Activated B cell treated with CpG ODN at 0.5 μM for 24 hours (primary cell): ENCODE measurements at regions of chr11 and their contacts with region 1.

Region 1: DNA sequence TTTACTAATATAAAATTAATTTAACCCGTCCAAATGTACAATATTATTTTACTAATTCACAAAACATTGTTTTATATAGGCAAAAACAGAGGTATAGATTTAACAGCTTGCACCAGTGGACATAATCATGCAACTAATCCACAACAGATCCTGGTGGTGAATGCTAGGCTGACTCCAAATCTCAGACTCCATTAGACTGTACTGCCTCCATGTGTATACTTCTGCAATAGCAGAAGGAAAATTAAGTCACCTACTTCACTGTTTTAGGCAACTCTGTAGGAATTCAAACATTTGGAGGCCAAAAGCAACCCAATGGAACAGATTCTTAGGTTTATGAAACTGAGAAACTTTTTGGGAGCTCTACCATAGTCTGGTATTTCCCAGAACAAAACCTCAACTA is 30.0 kb upstream of the RAB39A start:
- DNase-seq: no peak
- ATAC-seq: peak; percentile 57
- H3K4me3 Mint-ChIP-seq: no peak overlapping the region
- H3K27ac Mint-ChIP-seq: no peak overlapping the region
- H3K4me1 Mint-ChIP-seq: no peaks in the 10 kb centered on the region
- H3K27me3 Mint-ChIP-seq: peaks cover 5% of the 10 kb centered on the region
- CTCF ChIP-seq: no peak

Region 2: GRCh38 chr11:107573438-107573837 is 324.8 kb before region 1 on chr11:
- CTCF ChIA-PET with region 1: interaction called, 4 read pairs
- POLR2A ChIA-PET with region 1: no interaction called
- intact Hi-C with region 1: loop called (anchors 1 kb)
- DNase-seq: no peak
- ATAC-seq: no peak
- H3K4me3 Mint-ChIP-seq: no peak overlapping the region
- H3K27ac Mint-ChIP-seq: no peak overlapping the region
- H3K4me1 Mint-ChIP-seq: peaks cover 2% of the 10 kb centered on the region
- H3K27me3 Mint-ChIP-seq: no peaks in the 10 kb centered on the region
- CTCF ChIP-seq: no peak

Region 3: GRCh38 chr11:107741044-107741823 is 157.0 kb before region 1 on chr11:
- CTCF ChIA-PET with region 1: interaction called, 4 read pairs
- POLR2A ChIA-PET with region 1: no interaction called
- intact Hi-C with region 1: loop called (anchors 1 kb)
- DNase-seq: no peak
- ATAC-seq: peak; percentile 28
- H3K4me3 Mint-ChIP-seq: no peak overlapping the region
- H3K27ac Mint-ChIP-seq: no peak overlapping the region
- H3K4me1 Mint-ChIP-seq: no peaks in the 10 kb centered on the region
- H3K27me3 Mint-ChIP-seq: peaks cover 22% of the 10 kb centered on the region
- CTCF ChIP-seq: no peak

Region 4: DNA sequence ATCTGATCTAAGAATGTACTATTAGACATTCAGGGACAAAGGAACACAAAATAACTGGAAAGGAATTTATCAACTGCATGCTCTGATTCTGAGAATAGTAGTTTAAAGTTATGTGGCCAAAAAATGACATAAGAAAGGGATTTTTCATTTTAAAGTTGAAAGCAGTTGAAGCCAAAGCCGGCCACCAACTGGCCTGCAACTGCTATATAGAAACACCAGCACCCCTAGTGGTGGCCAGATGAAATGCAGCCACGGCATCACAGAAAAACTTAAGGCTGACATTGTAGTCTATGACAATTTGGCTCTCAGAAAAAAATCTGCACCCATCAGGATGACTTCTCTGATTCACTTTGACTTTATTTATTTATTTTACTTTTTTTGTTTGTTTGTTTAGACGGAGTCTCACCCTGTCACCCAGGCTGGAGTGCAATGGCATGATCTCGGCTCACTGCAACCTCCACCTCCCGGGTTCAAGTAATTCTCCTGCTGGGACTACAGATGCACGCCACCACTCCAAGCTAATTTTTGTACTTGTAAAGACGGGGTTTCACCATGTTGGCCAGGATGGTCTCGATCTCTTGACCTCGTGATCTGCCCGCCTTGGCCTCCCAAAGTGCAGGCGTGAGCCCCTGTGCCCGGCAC is 98.9 kb before region 1 on chr11:
- CTCF ChIA-PET with region 1: no interaction called
- POLR2A ChIA-PET with region 1: no interaction called
- intact Hi-C with region 1: loop called (anchors 2 kb)
- DNase-seq: peak; percentile 17
- ATAC-seq: peak; percentile 84
- H3K4me3 Mint-ChIP-seq: no peak overlapping the region
- H3K27ac Mint-ChIP-seq: no peak overlapping the region
- H3K4me1 Mint-ChIP-seq: no peaks in the 10 kb centered on the region
- H3K27me3 Mint-ChIP-seq: no peaks in the 10 kb centered on the region
- CTCF ChIP-seq: peak; percentile 62